PC-9 (cell line): ENCODE measurements at regions of chr4 and their contacts with region 1.

Region 1: DNA sequence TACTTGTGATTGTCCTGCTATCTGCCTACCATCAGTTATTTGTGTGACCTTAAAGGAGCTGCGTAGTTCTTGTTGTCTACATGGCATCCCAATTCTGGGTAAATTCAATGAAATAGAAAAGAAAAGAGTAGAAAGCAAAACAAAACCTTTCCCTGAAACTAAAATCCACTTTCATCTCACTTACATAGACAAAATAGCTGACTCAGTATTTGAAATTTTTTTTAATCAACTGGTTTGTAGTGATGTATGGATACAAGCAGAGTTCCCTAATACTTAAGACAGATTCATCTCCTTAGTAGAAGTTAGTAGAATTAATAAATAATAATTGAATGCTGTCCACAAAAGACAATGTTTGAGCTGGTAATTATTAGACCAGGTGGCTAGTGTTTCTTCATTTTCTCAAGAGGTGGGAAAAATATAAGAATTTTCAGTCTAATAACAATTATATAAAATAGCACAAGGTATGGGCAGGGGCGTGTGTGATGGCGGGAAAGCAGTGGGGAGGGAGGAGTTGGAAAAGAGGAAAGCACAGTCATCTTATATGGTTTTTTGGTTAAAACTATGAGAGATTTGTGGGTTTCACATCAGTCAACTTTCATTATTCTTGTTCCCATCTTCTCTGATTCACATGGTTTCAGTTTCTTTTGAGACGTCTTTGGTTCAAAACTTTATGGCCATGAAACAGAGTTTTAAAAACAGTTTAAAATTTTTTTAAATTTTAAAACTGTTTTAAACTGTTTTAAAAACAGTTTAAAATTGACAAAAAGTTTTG is 275.2 kb downstream of the SPRY1 start:
- DNase-seq: no peak
- H3K4me3 ChIP-seq: no peak overlapping the region
- H3K27ac ChIP-seq: no peak overlapping the region
- H3K4me1 ChIP-seq: peaks cover 30% of the 10 kb centered on the region
- H3K27me3 ChIP-seq: no peaks in the 10 kb centered on the region
- CTCF ChIP-seq: no peak

Region 2: GRCh38 chr4:123325241-123325681 is 346.6 kb before region 1 on chr4:
- CTCF ChIA-PET with region 1: interaction called, 12 read pairs
- POLR2A ChIA-PET with region 1: no interaction called
- intact Hi-C with region 1: no loop called
- DNase-seq: no peak
- H3K4me3 ChIP-seq: no peak overlapping the region
- H3K27ac ChIP-seq: no peak overlapping the region
- H3K4me1 ChIP-seq: no peaks in the 10 kb centered on the region
- H3K27me3 ChIP-seq: no peaks in the 10 kb centered on the region
- CTCF ChIP-seq: no peak

Region 3: GRCh38 chr4:123705419-123705818 is 33.6 kb after region 1 on chr4:
- CTCF ChIA-PET with region 1: no interaction called
- POLR2A ChIA-PET with region 1: interaction called, 10 read pairs
- intact Hi-C with region 1: no loop called
- DNase-seq: no peak
- H3K4me3 ChIP-seq: no peak overlapping the region
- H3K27ac ChIP-seq: no peak overlapping the region
- H3K4me1 ChIP-seq: 0 out of 2 replicates have a peak, but pooled peaks cover 4% of the 10 kb centered on the region
- H3K27me3 ChIP-seq: no peaks in the 10 kb centered on the region
- CTCF ChIP-seq: no peak

Region 4: DNA sequence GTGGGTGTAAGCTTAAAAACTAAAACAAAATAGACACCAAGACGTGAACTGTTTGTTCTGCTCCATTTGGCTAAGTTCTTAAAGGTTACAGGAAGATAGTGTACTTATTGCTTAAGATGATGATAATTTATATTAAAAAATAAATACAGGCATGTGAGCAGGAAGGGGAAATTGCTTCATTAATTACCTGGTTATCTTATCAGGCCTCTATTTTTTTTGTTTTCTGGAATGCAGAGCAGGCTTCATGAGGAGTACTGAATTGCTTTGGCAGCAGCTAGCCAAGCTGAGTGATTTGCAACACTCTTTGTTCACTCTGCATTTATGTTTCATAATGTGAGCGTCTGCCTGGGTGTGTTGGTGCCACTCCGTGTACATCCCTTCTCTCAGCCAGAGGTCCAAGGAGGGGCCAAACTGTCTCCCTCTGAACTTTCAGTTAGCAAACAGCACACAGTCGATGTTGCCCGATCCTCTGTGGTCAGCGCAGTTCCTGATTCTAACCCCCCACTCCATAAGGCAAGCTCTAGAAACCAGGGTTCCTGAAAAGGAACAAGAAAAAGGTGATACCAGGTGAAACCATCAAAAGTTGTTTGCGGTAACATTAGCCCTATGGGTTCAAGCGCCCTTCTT is 73.0 kb after region 1 on chr4:
- CTCF ChIA-PET with region 1: no interaction called
- POLR2A ChIA-PET with region 1: no interaction called
- intact Hi-C with region 1: loop called (anchors 10 kb)
- DNase-seq: peak in 1 of 2 experiments; percentile 8
- H3K4me3 ChIP-seq: no peak overlapping the region
- H3K27ac ChIP-seq: no peak overlapping the region
- H3K4me1 ChIP-seq: peaks cover 2% of the 10 kb centered on the region; the same call in 1 of the 2 replicates
- H3K27me3 ChIP-seq: no peaks in the 10 kb centered on the region
- CTCF ChIP-seq: no peak

Region 5: DNA sequence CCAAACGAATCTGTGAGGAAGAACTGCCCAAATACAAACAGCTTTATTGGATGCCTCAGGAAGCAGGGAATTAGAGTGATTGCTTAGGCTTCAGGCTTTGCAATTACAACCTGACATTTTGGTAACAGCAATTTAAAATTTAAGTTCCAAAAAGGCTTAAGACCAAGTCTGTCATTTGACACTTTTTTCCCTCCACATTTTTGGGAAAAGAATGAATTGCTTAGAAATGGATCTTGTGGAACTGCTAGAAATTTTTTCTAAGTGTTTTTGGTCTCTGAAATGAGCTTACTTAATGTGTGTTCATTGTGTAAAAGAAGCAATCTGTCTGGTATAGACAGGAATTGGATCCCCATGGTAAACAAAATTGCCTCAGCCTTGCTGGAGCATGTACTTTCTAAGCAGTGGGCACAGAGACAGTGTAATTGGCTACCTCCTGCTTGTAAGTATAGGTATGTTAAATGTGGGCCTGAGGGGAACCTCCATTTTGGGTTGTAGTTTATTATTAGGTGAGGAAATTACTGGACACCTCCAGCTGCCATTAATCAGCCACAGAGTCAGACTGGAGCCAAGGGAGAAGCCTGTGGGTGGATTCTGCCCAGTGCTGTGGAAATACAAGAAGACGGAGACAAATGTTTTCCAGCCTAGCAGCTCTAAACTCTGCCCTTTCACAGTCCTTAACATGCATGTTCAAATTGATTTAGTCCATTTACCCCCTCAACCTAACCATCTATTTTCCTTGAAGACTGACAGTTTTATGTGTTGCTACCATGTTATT is 197.7 kb after region 1 on chr4:
- CTCF ChIA-PET with region 1: no interaction called
- POLR2A ChIA-PET with region 1: no interaction called
- intact Hi-C with region 1: no loop called
- DNase-seq: no peak
- H3K4me3 ChIP-seq: no peak overlapping the region
- H3K27ac ChIP-seq: no peak overlapping the region
- H3K4me1 ChIP-seq: no peaks in the 10 kb centered on the region
- H3K27me3 ChIP-seq: no peaks in the 10 kb centered on the region
- CTCF ChIP-seq: no peak

Region 6: GRCh38 chr4:123976285-123976684 is 304.5 kb after region 1 on chr4:
- CTCF ChIA-PET with region 1: no interaction called
- POLR2A ChIA-PET with region 1: no interaction called
- intact Hi-C with region 1: no loop called
- DNase-seq: no peak
- H3K4me3 ChIP-seq: no peak overlapping the region
- H3K27ac ChIP-seq: no peak overlapping the region
- H3K4me1 ChIP-seq: no peaks in the 10 kb centered on the region
- H3K27me3 ChIP-seq: no peaks in the 10 kb centered on the region
- CTCF ChIP-seq: no peak